CD14-positive monocyte (primary cell): ENCODE measurements at regions of chr22 and their contacts with region 1.

Region 1: DNA sequence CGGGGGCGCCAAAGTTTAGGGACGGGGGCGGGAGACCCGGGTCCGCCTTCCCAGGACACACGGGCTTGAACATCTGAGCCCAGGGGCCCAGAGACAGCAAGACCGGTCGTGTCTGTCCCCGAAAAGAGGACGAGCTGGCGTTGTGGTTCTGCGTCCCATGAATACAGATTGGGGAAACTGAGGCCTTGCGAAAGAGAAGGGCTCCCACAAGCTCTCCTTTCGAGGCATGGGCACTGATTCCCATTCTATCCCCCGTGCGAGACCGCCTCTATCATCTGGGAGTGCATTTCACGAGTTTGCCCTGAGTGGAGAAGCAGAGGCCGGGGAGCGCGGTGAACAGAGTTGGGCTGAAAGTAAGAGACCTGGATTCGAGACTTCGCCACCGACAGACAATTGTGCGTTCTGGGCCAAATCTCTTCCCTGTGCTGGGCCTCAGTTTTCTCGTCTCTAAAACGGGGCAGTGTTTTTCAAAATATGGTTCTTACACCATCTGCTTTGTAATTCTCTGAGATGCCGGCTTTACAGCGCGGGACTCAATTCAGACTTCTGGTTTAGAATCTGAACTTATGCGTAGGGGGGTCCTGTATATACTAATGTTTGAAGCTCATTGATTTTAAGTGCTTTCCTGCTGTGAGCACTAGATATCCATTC is 471 bp downstream of the RNF185 start:
- DNase-seq: peak in 1 of 3 donors; percentile 54
- H3K4me3 ChIP-seq: peak overlapping the region; percentile 70 to 90 (median 81)
- H3K4me3 Mint-ChIP-seq: peak overlapping the region; percentile 93
- H3K27ac ChIP-seq: peak overlapping the region; percentile 52 to 84
- H3K27ac Mint-ChIP-seq: peak overlapping the region; percentile 91 to 96 (median 93)
- H3K4me1 ChIP-seq: peaks cover 17 to 28% of the 10 kb centered on the region in 2 donors
- H3K4me1 Mint-ChIP-seq: peaks cover 27% of the 10 kb centered on the region
- H3K27me3 ChIP-seq: no peaks in the 10 kb centered on the region
- H3K27me3 Mint-ChIP-seq: peaks cover 5 to 8% (median 6%) of the 10 kb centered on the region in 3 donors
- CTCF ChIP-seq: no peak

Region 2: GRCh38 chr22:31080848-31081649 is 79.4 kb before region 1 on chr22 and contains the start of gene SMTN:
- intact Hi-C with region 1: loop called in 1 of 2 experiments (anchors 5 kb)
- DNase-seq: peak; percentile 76 to 86 (median 80)
- H3K4me3 ChIP-seq: peak within 1 kb of the TSS; percentile 56 to 85 (median 75)
- H3K4me3 Mint-ChIP-seq: peak within 1 kb of the TSS; percentile 83 to 94
- H3K27ac ChIP-seq: peak within 1 kb of the TSS in 1 of 2 donors; percentile 64
- H3K27ac Mint-ChIP-seq: peak within 1 kb of the TSS in 6 of 7 donors; percentile 40 to 87 (median 74)
- H3K4me1 ChIP-seq: peaks cover 40 to 53% of the 10 kb centered on the region in 2 donors
- H3K4me1 Mint-ChIP-seq: peaks cover 45% of the 10 kb centered on the region
- H3K27me3 ChIP-seq: no peaks in the 10 kb centered on the region
- H3K27me3 Mint-ChIP-seq: peaks cover 3 to 6% (median 4%) of the 10 kb centered on the region in 3 donors
- CTCF ChIP-seq: no peak
- polyA plus RNA-seq, gene SMTN: 0.87 to 13.3 (median 0.88) TPM

Region 3: GRCh38 chr22:31290494-31291471 is 130.3 kb after region 1 on chr22:
- intact Hi-C with region 1: loop called in 1 of 2 experiments (anchors 5 kb)
- DNase-seq: peak; percentile 86 to 93 (median 91)
- H3K4me3 ChIP-seq: peak overlapping the region; percentile 68 to 96 (median 94)
- H3K4me3 Mint-ChIP-seq: peak overlapping the region; percentile 92 to 97
- H3K27ac ChIP-seq: peak overlapping the region; percentile 96 to 99
- H3K27ac Mint-ChIP-seq: peak overlapping the region; percentile 99 to 100 (median 99)
- H3K4me1 ChIP-seq: peaks cover 74 to 92% of the 10 kb centered on the region in 2 donors
- H3K4me1 Mint-ChIP-seq: peaks cover 67% of the 10 kb centered on the region
- H3K27me3 ChIP-seq: no peaks in the 10 kb centered on the region
- H3K27me3 Mint-ChIP-seq: peaks cover 0 to 5% (median 3%) of the 10 kb centered on the region in 3 donors
- CTCF ChIP-seq: no peak

Region 4: DNA sequence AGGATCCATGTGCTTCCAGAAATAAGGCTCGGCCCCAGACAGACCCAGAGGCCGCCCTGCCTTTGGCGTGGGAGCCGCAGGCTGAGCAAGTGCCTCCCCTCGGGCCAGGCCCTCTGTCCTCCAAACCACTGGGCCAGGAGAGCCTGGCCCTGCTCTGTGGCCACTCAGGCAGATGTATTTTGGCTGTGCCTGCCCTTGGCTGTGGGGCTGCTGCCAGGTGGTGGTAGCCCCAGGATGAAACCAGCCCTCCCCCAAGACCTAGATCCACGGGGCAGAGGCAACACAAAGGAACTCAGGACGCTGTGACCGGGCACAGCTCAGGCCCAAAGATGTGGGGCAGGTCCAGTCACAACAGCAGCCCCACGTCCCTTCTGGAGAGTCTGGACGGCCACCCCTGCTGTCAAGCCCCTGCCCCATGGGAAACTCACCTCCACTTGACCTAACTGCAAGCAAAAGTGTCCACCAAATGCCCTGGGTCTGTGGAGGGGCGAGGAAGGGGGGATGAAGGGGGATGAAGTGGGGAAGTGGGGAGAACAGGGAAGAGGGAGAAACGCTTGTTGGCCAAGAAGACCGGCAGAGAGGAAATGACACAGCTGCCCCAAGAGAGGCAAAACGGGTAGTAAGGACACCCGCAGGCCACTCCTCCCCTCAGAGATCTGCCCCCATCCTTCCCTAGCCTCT is 477.6 kb after region 1 on chr22:
- intact Hi-C with region 1: loop called in 1 of 2 experiments (anchors 5 kb)
- DNase-seq: peak; percentile 84 to 89 (median 89)
- H3K4me3 ChIP-seq: peak overlapping the region; percentile 60 to 96 (median 74)
- H3K4me3 Mint-ChIP-seq: peak overlapping the region; percentile 92 to 98
- H3K27ac ChIP-seq: peak overlapping the region; percentile 97 to 98
- H3K27ac Mint-ChIP-seq: peak overlapping the region; percentile 95 to 98 (median 97)
- H3K4me1 ChIP-seq: peaks cover 76 to 92% of the 10 kb centered on the region in 2 donors
- H3K4me1 Mint-ChIP-seq: peaks cover 80% of the 10 kb centered on the region
- H3K27me3 ChIP-seq: no peaks in the 10 kb centered on the region
- H3K27me3 Mint-ChIP-seq: peaks cover 0 to 3% (median 0%) of the 10 kb centered on the region in 3 donors
- CTCF ChIP-seq: no peak